ENCODE measurements at regions of chr14 and their contacts with region 1.

Region 1: GRCh38 chr14:76910371-76910890 is 84.2 kb downstream of the LRRC74A start:
- DNase-seq: no peak
- ATAC-seq: no peak
- H3K4me3 ChIP-seq: no peak overlapping the region
- H3K27ac ChIP-seq: no peak overlapping the region
- H3K4me1 ChIP-seq: peaks cover 6 to 25% (median 13%) of the 10 kb centered on the region in 9 donors
- H3K27me3 ChIP-seq: no peaks in the 10 kb centered on the region
- CTCF ChIP-seq: no peak

Region 2: DNA sequence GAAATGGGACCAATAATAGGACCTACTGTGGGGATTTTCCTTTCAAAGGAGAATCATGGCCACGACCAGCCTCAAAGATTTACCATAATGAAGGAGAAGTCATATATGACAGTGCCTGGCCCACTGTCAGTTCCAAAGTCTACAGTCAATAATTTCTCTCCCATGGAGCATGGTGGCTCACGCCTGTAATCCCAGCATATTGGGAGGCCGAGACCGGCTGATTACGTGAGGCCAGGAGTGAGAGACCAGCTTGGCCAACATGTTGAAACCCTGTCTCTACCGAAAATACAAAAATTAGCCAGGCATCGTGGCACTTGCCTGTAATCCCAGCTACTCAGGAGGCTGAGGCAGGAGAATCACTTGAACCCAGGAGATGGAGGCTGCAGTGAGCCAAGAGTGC is 104.3 kb after region 1 on chr14:
- intact Hi-C with region 1: no loop called
- DNase-seq: no peak
- ATAC-seq: no peak
- H3K4me3 ChIP-seq: no peak overlapping the region
- H3K27ac ChIP-seq: peak overlapping the region in 6 of 10 donors; percentile 63 to 82 (median 78)
- H3K4me1 ChIP-seq: peaks cover 0 to 22% (median 12%) of the 10 kb centered on the region in 9 donors
- H3K27me3 ChIP-seq: no peaks in the 10 kb centered on the region
- CTCF ChIP-seq: no peak

Region 3: DNA sequence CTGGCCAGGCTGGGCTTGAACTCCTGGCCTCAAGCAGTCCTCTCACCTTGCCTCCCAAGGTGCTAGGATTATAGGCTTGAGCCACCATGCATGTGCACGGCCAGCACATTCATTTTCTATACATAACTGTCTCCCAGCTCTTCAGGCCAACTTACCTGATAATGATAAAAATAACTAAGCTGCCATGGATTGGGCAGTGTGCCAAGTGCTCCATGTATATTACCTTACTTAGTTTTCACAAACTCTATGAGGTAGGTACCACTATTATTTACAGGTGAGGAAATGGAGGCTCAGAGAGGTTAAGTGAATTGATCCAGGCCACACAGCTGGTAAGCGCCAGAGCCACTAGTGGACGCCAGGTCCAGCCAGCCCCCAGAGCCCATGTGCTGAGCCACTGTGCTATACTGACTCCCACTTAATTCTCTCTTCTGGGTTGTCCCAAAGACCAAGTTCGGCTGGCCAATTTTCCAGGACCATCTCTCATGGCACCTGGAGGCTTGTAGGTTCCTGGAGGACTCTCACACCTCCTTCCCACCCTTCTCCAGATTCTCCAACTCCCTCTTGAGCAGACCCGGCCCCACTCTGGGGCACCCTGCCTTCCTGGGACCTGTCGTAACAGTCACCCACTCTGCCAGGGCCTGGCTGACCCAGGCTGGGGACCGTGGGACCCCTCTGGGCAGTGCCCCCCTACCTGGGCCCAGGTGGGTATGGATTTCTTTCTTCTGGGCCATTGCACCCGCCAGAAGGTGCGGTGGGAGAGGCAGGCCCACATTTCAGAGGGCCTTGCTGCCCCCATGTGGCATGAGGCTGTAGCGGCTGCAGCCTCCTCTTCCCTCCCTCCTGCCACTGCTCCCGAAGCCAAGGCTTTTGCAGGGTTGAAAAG is 157.4 kb after region 1 on chr14:
- intact Hi-C with region 1: loop called in 7 of 10 experiments (anchors 1 to 5 kb)
- DNase-seq: peak; percentile 63 to 75
- ATAC-seq: peak; percentile 68 to 81 (median 74)
- H3K4me3 ChIP-seq: no peak overlapping the region
- H3K27ac ChIP-seq: peak overlapping the region in 5 of 10 donors; percentile 23 to 51 (median 38)
- H3K4me1 ChIP-seq: peaks cover 6 to 56% (median 40%) of the 10 kb centered on the region in 9 donors
- H3K27me3 ChIP-seq: no peaks in the 10 kb centered on the region
- CTCF ChIP-seq: peak; percentile 71 to 96 (median 86)